ENCODE measurements at regions of chr11 and their contacts with region 1.

Region 1: GRCh38 chr11:116691771-116692177 is 81.0 kb downstream of the BUD13 start:
- DNase-seq: peak; percentile 16
- H3K4me3 Mint-ChIP-seq: no peak overlapping the region
- H3K27ac Mint-ChIP-seq: no peak overlapping the region
- H3K4me1 Mint-ChIP-seq: no peaks in the 10 kb centered on the region
- H3K27me3 Mint-ChIP-seq: peaks cover 6% of the 10 kb centered on the region

Region 2: GRCh38 chr11:115334932-115335788 is 1356.6 kb before region 1 on chr11:
- intact Hi-C with region 1: loop called (anchors 2 kb)
- DNase-seq: no peak
- H3K4me3 Mint-ChIP-seq: no peak overlapping the region
- H3K27ac Mint-ChIP-seq: no peak overlapping the region
- H3K4me1 Mint-ChIP-seq: no peaks in the 10 kb centered on the region
- H3K27me3 Mint-ChIP-seq: no peaks in the 10 kb centered on the region

Region 3: GRCh38 chr11:116454020-116454645 is 237.6 kb before region 1 on chr11:
- intact Hi-C with region 1: loop called (anchors 1 kb)
- DNase-seq: no peak
- H3K4me3 Mint-ChIP-seq: no peak overlapping the region
- H3K27ac Mint-ChIP-seq: no peak overlapping the region
- H3K4me1 Mint-ChIP-seq: no peaks in the 10 kb centered on the region
- H3K27me3 Mint-ChIP-seq: no peaks in the 10 kb centered on the region

Region 4: GRCh38 chr11:116513894-116514293 is 177.9 kb before region 1 on chr11:
- intact Hi-C with region 1: loop called (anchors 1 kb)
- DNase-seq: no peak
- H3K4me3 Mint-ChIP-seq: no peak overlapping the region
- H3K27ac Mint-ChIP-seq: no peak overlapping the region
- H3K4me1 Mint-ChIP-seq: peaks cover 4% of the 10 kb centered on the region
- H3K27me3 Mint-ChIP-seq: peaks cover 6% of the 10 kb centered on the region